ENCODE measurements at regions of chr2 and their contacts with region 1.

Region 1: GRCh38 chr2:177263451-177264208 is 897 bp downstream of the NFE2L2 start:
- DNase-seq: peak; percentile 99
- H3K4me3 Mint-ChIP-seq: peak overlapping the region; percentile 89
- H3K27ac Mint-ChIP-seq: peak overlapping the region; percentile 100
- H3K4me1 Mint-ChIP-seq: peaks cover 53% of the 10 kb centered on the region
- H3K27me3 Mint-ChIP-seq: no peaks in the 10 kb centered on the region

Region 2: GRCh38 chr2:176997074-176997791 is 266.4 kb before region 1 on chr2:
- intact Hi-C with region 1: loop called (anchors 10 kb)
- DNase-seq: peak; percentile 61
- H3K4me3 Mint-ChIP-seq: no peak overlapping the region
- H3K27ac Mint-ChIP-seq: peak overlapping the region; percentile 83
- H3K4me1 Mint-ChIP-seq: peaks cover 15% of the 10 kb centered on the region
- H3K27me3 Mint-ChIP-seq: peaks cover 10% of the 10 kb centered on the region

Region 3: DNA sequence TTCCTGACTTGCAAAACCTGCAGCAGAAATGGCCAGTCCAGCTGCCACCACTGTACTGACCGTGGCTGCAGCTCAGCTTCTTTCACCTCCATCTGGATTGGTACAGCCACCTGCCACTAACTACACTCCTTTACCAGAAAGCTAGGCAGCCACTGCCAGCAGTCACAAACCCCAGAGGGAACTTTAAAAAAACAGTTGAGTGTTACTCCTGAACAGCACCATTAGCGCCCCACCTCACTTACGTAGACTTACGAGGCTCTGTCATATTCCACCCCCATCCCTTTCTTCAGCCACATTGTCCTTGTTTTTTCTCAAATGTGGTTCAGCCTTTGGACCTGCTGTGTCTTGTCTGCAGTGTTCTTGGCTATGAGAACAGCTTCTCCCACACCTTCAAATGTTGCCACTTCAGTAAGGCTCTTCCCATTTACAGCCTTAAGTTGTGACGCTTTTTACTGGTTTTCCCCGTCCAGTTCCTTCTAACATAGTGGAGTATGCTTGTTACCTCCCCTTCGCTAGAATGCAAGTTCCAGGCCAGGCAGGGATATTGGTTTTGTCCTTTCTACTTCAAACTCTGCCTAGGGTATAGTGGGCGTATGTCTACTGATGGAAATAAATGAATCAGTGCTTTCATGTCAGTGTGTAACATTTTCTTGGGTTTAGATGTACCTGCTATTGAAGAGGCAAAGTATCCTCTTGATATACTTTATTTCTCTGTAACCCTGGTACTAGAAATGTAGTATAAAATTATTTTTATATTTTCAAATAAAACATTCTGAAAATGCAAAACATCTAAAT is 34.0 kb before region 1 on chr2:
- intact Hi-C with region 1: loop called (anchors 5 kb)
- DNase-seq: peak; percentile 54
- H3K4me3 Mint-ChIP-seq: no peak overlapping the region
- H3K27ac Mint-ChIP-seq: peak overlapping the region; percentile 54
- H3K4me1 Mint-ChIP-seq: peaks cover 31% of the 10 kb centered on the region
- H3K27me3 Mint-ChIP-seq: no peaks in the 10 kb centered on the region

Region 4: DNA sequence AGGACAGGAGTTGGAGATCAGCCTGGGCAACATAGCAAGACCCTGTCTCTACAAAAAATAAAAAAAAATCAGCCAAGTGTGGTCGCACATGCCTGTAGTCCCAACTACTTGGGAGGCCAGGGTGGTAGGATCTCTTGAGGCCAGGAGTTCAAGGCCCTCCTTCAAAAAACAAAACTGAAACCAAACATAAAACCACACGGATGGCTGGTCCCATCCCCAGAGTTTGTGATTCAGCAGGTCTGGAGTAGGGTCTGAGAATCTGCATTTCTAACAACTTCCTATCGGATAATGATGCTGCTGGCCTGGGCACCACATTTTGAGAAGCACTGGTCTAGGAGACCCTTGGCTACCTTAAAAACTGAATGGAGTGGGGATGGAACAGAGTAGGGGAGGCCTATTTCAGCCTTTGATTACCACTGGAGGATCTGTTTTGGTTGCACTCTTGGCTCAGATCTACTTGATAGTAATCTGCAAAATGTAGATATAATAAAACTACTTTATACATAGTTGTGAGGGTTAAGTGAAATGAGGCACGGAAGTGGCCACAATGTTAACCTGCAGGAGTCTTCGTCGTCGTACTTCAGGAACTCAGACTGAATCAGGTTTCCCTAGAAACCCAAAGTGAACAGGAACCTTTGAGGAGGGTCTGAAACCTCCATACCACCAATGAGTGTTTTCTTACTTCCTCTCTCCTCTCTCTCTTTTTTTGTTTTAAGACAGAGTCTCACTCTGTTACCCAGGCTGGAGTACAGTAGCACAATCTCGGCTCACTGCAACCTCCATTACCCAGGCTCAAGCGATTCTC is 26.4 kb after region 1 on chr2:
- intact Hi-C with region 1: loop called (anchors 1 kb)
- DNase-seq: peak; percentile 79
- H3K4me3 Mint-ChIP-seq: peak overlapping the region; percentile 67
- H3K27ac Mint-ChIP-seq: peak overlapping the region; percentile 77
- H3K4me1 Mint-ChIP-seq: peaks cover 43% of the 10 kb centered on the region
- H3K27me3 Mint-ChIP-seq: no peaks in the 10 kb centered on the region

Region 5: GRCh38 chr2:177314194-177314593 is 50.6 kb after region 1 on chr2:
- intact Hi-C with region 1: no loop called
- DNase-seq: no peak
- H3K4me3 Mint-ChIP-seq: no peak overlapping the region
- H3K27ac Mint-ChIP-seq: no peak overlapping the region
- H3K4me1 Mint-ChIP-seq: peaks cover 14% of the 10 kb centered on the region
- H3K27me3 Mint-ChIP-seq: no peaks in the 10 kb centered on the region

Region 6: GRCh38 chr2:177392373-177393202 is 129.0 kb after region 1 on chr2 and contains the start of gene AGPS:
- intact Hi-C with region 1: loop called (anchors 2 kb)
- DNase-seq: peak; percentile 95
- H3K4me3 Mint-ChIP-seq: peak within 1 kb of the TSS; percentile 91
- H3K27ac Mint-ChIP-seq: peak within 1 kb of the TSS; percentile 95
- H3K4me1 Mint-ChIP-seq: peaks cover 54% of the 10 kb centered on the region
- H3K27me3 Mint-ChIP-seq: no peaks in the 10 kb centered on the region
- total RNA-seq, gene AGPS: 74.0 and 76.7 TPM in 2 replicates

Region 7: DNA sequence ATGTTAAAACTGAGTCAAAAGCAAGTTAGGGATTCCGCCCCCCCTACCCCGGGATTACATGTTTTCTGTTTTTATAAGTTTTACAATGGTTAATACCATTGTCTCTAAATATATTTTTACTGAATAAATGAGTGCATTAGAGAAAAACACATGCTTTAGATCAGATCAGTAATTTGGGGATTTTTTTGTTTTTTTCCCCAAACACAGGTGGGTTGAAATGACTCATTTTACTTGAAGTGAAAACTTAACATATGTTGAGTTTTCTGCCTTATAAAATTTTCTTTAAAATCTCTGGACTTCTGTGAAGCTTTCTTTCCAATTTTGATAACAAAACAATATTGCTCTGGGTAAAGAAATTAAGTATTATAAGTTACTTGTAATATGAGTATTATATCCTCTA is 243.4 kb after region 1 on chr2:
- intact Hi-C with region 1: no loop called
- DNase-seq: no peak
- H3K4me3 Mint-ChIP-seq: no peak overlapping the region
- H3K27ac Mint-ChIP-seq: no peak overlapping the region
- H3K4me1 Mint-ChIP-seq: peaks cover 12% of the 10 kb centered on the region
- H3K27me3 Mint-ChIP-seq: no peaks in the 10 kb centered on the region

Region 8: GRCh38 chr2:177618255-177619253 is 354.9 kb after region 1 on chr2:
- intact Hi-C with region 1: loop called (anchors 1 kb)
- DNase-seq: peak; percentile 98
- H3K4me3 Mint-ChIP-seq: peak overlapping the region; percentile 92
- H3K27ac Mint-ChIP-seq: peak overlapping the region; percentile 97
- H3K4me1 Mint-ChIP-seq: peaks cover 8% of the 10 kb centered on the region
- H3K27me3 Mint-ChIP-seq: peaks cover 24% of the 10 kb centered on the region

Measured in activated CD4-positive, alpha-beta T cell treated with anti-CD3 and anti-CD28 coated beads, Interleukin-2, amount 10 ng/mL, durations not matched to agents 24 days and 14 days (primary cell).